Breast epithelium (tissue), 4 donors: ENCODE measurements at regions of chr5 and their contacts with region 1.

Region 1: DNA sequence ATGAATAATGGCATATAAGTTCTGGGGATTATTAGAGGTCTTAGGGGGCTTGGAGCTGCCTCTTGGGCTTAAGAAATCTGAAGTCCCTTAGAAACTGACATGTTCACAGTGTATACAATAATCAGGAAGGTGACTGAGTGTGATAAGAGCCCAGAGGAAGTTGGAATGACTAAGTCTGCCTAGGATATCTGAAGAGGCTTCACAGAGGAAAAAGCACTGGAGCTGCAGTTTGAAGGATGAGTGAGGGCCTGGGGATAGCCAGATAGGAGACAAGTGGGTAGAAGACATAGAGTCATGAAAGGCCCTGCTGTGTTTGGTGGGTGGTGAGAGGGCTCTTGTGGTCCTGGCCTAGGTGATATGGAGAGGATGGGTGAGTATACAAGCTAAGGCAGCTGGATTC is 8.8 kb downstream of the NEUROG1 start:
- DNase-seq: no peak
- H3K4me3 ChIP-seq: no peak overlapping the region
- H3K27ac ChIP-seq: no peak overlapping the region
- H3K4me1 ChIP-seq: no peaks in the 10 kb centered on the region
- H3K27me3 ChIP-seq: peaks cover 0 to 10% of the 10 kb centered on the region in 2 donors
- CTCF ChIP-seq: no peak
- POLR2A ChIP-seq: no peak

Region 2: DNA sequence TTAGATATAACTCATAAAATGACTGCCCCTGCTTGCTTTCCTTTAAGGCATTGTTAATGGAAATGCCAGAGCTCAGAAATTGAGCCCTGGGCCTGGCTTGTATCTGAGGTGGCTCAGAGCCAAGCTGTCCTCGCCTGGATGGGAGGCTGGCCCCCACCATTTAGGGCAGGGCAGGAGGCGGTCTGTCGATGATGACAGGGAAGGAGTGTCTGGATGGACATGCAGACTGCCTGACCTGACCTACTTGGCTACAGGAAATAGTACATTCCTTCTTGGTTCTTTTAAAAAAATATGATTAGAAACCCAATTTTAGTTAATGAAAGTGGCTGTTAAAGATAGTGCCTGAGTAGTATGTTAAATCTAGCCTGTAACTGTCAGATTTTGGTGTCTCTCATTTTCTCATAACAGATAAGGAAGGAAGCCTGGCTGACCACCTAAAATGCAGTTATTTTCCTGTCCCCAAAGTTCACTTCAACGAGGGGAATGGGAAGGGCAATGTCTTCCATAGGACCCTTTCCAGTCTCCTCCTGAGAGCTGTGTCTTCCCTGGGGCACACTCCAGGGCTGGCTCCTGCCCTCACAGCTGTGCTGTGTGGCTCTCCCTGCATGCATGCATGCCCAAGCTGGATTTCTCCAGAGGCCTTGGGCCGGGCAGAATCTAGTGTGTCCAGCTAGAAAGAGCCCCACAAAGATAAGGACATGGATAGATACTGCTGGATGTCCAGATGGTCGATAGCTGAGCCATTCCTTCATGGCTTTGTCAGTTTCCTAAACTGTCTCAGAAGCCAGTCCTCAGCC is 170.2 kb before region 1 on chr5:
- intact Hi-C with region 1: no loop called
- DNase-seq: no peak
- H3K4me3 ChIP-seq: no peak overlapping the region
- H3K27ac ChIP-seq: peak overlapping the region; percentile 22 to 73
- H3K4me1 ChIP-seq: peaks cover 0 to 3% of the 10 kb centered on the region in 2 donors
- H3K27me3 ChIP-seq: no peaks in the 10 kb centered on the region
- CTCF ChIP-seq: no peak
- POLR2A ChIP-seq: no peak

Region 3: DNA sequence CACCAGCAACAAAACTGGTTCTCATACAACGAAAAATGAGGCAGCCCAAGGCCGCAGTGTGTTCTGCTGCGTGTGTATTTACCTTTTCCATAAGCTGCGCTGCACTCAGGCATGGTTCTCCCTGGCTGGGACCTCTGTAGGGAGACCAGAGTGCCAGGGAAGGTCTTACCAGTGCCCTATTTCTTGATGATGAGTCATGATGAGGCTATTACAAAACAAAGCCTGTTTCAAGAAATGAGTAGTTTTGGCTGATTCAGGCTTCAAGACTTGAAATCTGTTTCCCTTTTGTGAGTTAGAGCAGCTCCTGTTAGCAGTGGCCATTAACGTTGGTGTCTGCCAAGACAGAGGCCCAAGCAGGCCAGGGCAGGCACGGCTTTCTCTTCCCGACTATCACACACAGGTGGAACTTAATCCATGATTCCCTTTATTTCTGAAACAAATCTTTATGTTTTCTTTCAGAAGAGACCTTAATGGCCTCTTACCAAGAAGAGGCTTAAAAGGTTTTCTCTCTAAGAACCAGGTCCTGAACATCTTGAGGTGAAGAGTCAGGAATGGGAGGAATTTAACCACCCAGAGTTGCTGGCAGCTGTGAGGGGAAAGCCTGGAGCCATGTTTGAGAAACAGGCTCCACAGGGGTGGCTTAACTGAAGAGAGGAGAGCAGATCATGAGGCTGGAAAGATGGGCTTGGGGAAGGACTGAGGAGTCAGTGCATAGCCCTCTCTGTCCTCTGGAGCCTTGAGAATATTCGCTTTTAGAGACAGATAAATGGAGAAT is 33.3 kb before region 1 on chr5:
- intact Hi-C with region 1: loop called (anchors 1 kb)
- DNase-seq: peak in 1 of 2 donors; percentile 54
- H3K4me3 ChIP-seq: no peak overlapping the region
- H3K27ac ChIP-seq: peak overlapping the region; percentile 75 to 84
- H3K4me1 ChIP-seq: no peaks in the 10 kb centered on the region
- H3K27me3 ChIP-seq: peaks cover 0 to 7% of the 10 kb centered on the region in 2 donors
- CTCF ChIP-seq: no peak
- POLR2A ChIP-seq: no peak

Region 4: DNA sequence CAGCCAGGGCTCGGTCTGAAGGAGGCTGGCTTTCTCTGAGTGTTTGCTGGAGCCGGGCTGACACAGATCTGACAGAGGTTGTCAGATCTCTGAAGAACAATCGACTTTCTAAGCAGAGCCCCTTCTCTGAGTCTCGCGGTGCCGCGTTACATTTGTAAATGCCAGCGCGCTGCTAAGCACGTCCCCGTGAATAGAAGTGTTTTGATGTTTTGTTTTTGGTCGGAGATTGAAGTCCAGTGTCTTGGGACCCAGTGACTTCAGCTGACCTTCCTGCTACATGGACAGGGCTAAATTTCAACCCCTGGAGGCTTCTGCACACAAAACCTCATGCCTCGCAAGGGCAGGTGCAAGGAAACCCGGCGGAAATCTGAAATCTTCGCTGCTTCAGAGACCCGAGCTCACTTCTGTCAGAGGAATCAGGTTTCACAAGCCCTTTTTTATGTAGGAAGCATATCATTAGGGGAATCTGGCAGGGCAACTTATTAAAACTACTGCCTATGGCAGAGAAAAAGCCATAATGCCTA is 18.4 kb before region 1 on chr5:
- intact Hi-C with region 1: no loop called
- DNase-seq: no peak
- H3K4me3 ChIP-seq: peak overlapping the region in 1 of 3 donors; percentile 7
- H3K27ac ChIP-seq: no peak overlapping the region
- H3K4me1 ChIP-seq: no peaks in the 10 kb centered on the region
- H3K27me3 ChIP-seq: peaks cover 0 to 9% of the 10 kb centered on the region in 2 donors
- CTCF ChIP-seq: no peak
- POLR2A ChIP-seq: no peak